SK-N-SH (cell line): ENCODE measurements at regions of chr11 and their contacts with region 1.

Region 1: DNA sequence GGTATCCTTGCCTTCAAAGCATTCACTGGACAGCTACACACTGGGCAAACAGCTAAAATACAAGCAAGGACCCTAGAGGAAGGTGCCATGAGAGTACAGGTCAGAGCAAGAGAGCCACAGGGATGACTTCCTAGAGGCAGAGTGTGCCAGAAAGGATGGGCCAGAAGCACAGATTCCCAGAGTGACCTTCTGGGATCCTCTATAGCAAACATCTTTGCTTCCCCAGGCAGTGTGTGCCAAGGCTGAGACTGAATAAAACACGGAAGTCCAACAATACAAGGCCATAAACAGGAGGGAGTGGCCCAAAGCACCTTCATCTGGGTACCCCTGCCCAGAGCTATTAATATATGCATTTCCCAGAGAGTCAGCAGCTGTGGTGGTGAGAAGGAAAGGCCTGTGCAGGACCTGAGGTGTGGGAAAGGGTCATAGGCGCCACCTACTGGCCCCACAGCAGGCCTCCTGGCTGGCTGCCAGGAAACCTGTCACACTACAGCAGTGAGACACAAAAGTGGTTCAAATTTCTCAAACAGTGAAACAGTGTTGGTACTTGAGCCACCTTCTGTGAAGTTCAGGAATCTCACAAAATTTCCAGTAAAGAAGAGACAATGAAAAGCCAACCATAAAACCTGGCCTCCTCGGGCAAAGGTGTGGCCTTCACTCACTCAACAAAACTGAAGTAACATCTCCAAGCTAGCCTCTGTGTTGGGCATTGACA is 20.3 kb downstream of the CLPB start:
- DNase-seq: peak; percentile 80
- H3K4me3 ChIP-seq: no peak overlapping the region
- H3K27ac ChIP-seq: peak overlapping the region; percentile 52 to 100; a peak in 3 of 4 replicates
- H3K4me1 ChIP-seq: peaks cover 23 to 52% of the 10 kb centered on the region in 2 experiments
- H3K27me3 ChIP-seq: no peaks in the 10 kb centered on the region
- CTCF ChIP-seq: peak; percentile 93
- EP300 ChIP-seq: peak in 1 of 2 experiments; percentile 78; a peak in 2 of 4 replicates
- RAD21 ChIP-seq: peak; percentile 97

Region 2: DNA sequence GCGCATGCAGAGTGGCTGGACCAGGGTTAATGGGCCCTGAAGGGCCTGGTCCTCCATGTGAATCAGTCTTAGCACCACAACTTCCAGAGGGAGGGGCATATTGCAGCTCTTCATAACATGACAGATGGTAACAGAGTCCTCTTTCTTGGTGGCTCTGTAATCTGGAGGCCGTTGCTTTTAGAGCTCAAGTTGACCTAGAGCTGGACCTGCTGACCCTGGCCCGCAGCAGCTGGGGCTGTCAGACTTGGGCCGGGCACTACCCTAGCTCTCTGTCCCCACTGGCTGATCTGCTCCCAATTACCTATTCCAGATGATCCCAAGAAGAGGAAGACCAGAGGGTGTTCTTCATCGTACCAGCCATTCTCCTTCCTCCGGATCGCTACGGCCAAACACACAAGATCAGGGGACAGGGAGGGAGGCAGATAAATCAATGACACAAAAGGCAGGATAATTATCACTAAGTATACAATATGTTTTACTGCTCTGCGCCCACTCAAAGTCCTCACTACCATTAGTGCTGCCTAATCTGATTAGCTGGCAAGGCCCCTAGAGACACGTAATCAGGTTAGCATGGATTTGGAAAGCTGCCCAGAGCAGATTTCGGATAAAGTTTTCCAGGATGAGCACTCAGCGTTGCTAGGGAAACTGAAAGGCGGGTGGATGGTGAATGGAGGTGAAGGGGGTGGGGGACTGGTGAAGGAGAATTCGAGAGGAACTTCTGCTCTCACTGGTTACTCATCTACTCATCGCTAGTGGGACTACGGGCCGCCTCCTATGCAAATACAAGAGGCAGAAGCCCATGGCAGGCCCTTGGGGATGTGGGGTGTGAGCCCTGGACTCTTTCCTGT is 105.6 kb before region 1 on chr11:
- CTCF ChIA-PET with region 1: interaction called, 37 read pairs
- POLR2A ChIA-PET with region 1: interaction called, 13 read pairs
- DNase-seq: peak; percentile 81
- H3K4me3 ChIP-seq: no peak overlapping the region; a peak in 1 of 4 replicates
- H3K27ac ChIP-seq: peak overlapping the region; percentile 96 to 100
- H3K4me1 ChIP-seq: peaks cover 31 to 76% of the 10 kb centered on the region in 2 experiments
- H3K27me3 ChIP-seq: no peaks in the 10 kb centered on the region
- CTCF ChIP-seq: no peak; the same call in 1 of the 2 replicates
- EP300 ChIP-seq: peak; percentile 93 to 99
- RAD21 ChIP-seq: peak; percentile 43

Region 3: GRCh38 chr11:72328366-72329224 is 85.5 kb before region 1 on chr11:
- CTCF ChIA-PET with region 1: interaction called, 26 read pairs
- POLR2A ChIA-PET with region 1: interaction called, 18 read pairs
- DNase-seq: no peak
- H3K4me3 ChIP-seq: no peak overlapping the region
- H3K27ac ChIP-seq: peak overlapping the region; percentile 87 to 100
- H3K4me1 ChIP-seq: peaks cover 62 to 71% of the 10 kb centered on the region in 2 experiments
- H3K27me3 ChIP-seq: no peaks in the 10 kb centered on the region
- CTCF ChIP-seq: peak; percentile 51
- EP300 ChIP-seq: peak; percentile 42 to 61; a peak in 3 of 4 replicates
- RAD21 ChIP-seq: peak; percentile 24; the same call in 1 of the 2 replicates

Region 4: DNA sequence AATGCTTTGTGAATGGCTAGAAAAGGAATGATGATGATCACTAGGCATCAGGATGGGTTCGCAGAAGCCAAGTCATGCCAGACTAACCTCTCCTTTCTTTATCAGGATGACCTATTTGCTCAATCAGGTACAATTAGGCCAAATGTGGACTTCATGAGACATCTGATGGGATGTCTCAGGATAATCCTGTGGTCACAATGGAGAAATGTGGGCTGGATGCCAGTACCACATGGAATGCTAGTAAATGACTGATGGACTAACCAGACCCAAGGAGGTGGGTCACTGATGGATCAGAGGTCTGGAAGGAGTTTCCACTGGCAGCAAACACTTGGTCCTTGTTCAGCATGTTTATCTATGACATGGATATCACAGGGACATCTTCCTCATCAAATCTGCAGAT is 75.3 kb before region 1 on chr11:
- CTCF ChIA-PET with region 1: interaction called, 25 read pairs
- POLR2A ChIA-PET with region 1: interaction called, 18 read pairs
- DNase-seq: no peak
- H3K4me3 ChIP-seq: no peak overlapping the region
- H3K27ac ChIP-seq: peak overlapping the region; percentile 15 to 99; a peak in 3 of 4 replicates
- H3K4me1 ChIP-seq: peaks cover 18 to 84% of the 10 kb centered on the region in 2 experiments; a peak in 3 of 4 replicates
- H3K27me3 ChIP-seq: no peaks in the 10 kb centered on the region
- CTCF ChIP-seq: no peak
- EP300 ChIP-seq: peak in 1 of 2 experiments; percentile 66; a peak in 1 of 4 replicates
- RAD21 ChIP-seq: no peak

Region 5: GRCh38 chr11:72358466-72359405 is 55.3 kb before region 1 on chr11:
- CTCF ChIA-PET with region 1: interaction called, 625 read pairs
- POLR2A ChIA-PET with region 1: interaction called, 368 read pairs
- DNase-seq: peak; percentile 74
- H3K4me3 ChIP-seq: peak overlapping the region; percentile 38 to 44; a peak in 3 of 4 replicates
- H3K27ac ChIP-seq: peak overlapping the region; percentile 76 to 100
- H3K4me1 ChIP-seq: peaks cover 21 to 71% of the 10 kb centered on the region in 2 experiments; a peak in 3 of 4 replicates
- H3K27me3 ChIP-seq: no peaks in the 10 kb centered on the region
- CTCF ChIP-seq: no peak
- EP300 ChIP-seq: peak; percentile 98 to 100
- RAD21 ChIP-seq: peak; percentile 59

Region 6: GRCh38 chr11:72425053-72425980 is 11.2 kb after region 1 on chr11:
- CTCF ChIA-PET with region 1: interaction called, 281 read pairs
- POLR2A ChIA-PET with region 1: interaction called, 19 read pairs
- DNase-seq: no peak
- H3K4me3 ChIP-seq: no peak overlapping the region
- H3K27ac ChIP-seq: no peak overlapping the region
- H3K4me1 ChIP-seq: peaks cover 6 to 24% of the 10 kb centered on the region in 2 experiments; a peak in 1 of 4 replicates
- H3K27me3 ChIP-seq: no peaks in the 10 kb centered on the region
- CTCF ChIP-seq: no peak
- EP300 ChIP-seq: no peak
- RAD21 ChIP-seq: no peak

Region 7: DNA sequence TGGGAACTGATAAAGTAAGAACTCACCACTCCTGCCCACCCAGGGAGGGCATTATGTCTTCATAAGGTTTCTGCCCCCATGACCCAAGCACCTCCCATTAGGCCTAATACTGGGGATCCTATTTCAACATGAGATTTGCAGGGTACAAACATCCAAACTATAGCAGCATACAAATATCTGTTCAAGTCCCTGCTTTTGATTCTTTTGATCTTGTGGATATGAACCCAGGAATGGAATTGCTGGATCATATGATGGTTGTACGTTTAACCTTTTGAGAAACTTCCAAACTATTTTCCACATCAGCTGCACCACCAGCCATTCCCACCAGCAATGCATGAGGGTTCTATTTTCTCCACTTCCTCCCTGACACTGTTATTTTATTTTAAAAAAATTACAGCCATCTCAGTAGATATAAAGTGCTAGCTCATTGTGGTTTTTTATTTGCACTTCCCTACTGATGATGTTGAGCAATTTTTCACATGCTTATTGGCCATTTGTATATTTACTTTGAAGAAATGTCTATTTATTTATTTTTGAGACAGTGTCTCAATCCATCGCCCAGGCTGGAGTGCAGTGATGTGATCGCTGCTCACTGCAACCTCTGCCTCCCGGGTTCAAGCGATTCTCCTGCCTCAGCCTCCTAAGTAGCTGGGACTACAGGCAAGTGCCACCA is 393.1 kb after region 1 on chr11:
- CTCF ChIA-PET with region 1: no interaction called
- POLR2A ChIA-PET with region 1: no interaction called
- DNase-seq: no peak
- H3K4me3 ChIP-seq: no peak overlapping the region
- H3K27ac ChIP-seq: no peak overlapping the region
- H3K4me1 ChIP-seq: peaks cover 0 to 2% of the 10 kb centered on the region in 2 experiments; a peak in 1 of 4 replicates
- H3K27me3 ChIP-seq: no peaks in the 10 kb centered on the region
- CTCF ChIP-seq: no peak
- EP300 ChIP-seq: no peak
- RAD21 ChIP-seq: no peak